ENCODE measurements at regions of chr17 and their contacts with region 1.

Region 1: GRCh38 chr17:28967221-28968140 is 16.2 kb upstream of the PHF12 start:
- DNase-seq: no peak
- ATAC-seq: no peak
- H3K4me3 ChIP-seq: no peak overlapping the region
- H3K27ac ChIP-seq: no peak overlapping the region
- H3K4me1 ChIP-seq: no peaks in the 10 kb centered on the region
- H3K27me3 ChIP-seq: no peaks in the 10 kb centered on the region
- CTCF ChIP-seq: no peak

Region 2: DNA sequence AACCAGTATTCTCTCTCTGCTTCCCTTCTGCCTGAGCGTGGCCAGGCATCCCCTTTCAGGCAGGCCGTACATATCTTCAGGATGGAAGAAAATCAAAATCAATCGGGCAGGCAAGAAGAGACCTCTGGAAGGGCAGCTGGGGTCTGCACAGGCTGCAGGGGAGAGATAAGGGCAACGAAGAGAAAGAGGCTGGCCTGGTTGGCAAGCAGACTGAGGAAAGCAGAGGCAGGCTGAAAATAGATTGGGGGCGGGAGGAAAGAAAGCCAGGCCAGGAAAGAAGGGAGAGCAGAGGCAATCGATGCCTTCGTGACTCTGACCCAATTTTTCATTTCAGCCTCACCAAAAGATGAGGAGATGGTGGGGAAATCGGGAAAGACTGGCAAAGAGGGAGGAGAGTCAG is 93.6 kb after region 1 on chr17:
- intact Hi-C with region 1: loop called in 1 of 2 experiments (anchors 5 kb)
- DNase-seq: no peak
- ATAC-seq: peak in 2 of 4 donors; percentile 34 to 74
- H3K4me3 ChIP-seq: no peak overlapping the region
- H3K27ac ChIP-seq: no peak overlapping the region
- H3K4me1 ChIP-seq: no peaks in the 10 kb centered on the region
- H3K27me3 ChIP-seq: peaks cover 0 to 1% (median 0%) of the 10 kb centered on the region in 3 donors
- CTCF ChIP-seq: no peak

Region 3: GRCh38 chr17:29116804-29117772 is 149.6 kb after region 1 on chr17:
- intact Hi-C with region 1: loop called (anchors 2 kb)
- DNase-seq: peak; percentile 84 to 93
- ATAC-seq: peak; percentile 25 to 61 (median 52)
- H3K4me3 ChIP-seq: no peak overlapping the region
- H3K27ac ChIP-seq: no peak overlapping the region
- H3K4me1 ChIP-seq: peaks cover 40% of the 10 kb centered on the region
- H3K27me3 ChIP-seq: no peaks in the 10 kb centered on the region
- CTCF ChIP-seq: peak; percentile 94